Common myeloid progenitor, CD34-positive (primary cell): ENCODE measurements at regions of chr14 and their contacts with region 1.

Region 1: GRCh38 chr14:63632932-63633514 is 8.6 kb downstream of the WDR89 start:
- DNase-seq: peak; percentile 38 to 69 (median 69)
- H3K4me3 ChIP-seq: no peak overlapping the region
- H3K27ac ChIP-seq: no peak overlapping the region
- H3K4me1 ChIP-seq: no peaks in the 10 kb centered on the region
- H3K27me3 ChIP-seq: no peaks in the 10 kb centered on the region

Region 2: DNA sequence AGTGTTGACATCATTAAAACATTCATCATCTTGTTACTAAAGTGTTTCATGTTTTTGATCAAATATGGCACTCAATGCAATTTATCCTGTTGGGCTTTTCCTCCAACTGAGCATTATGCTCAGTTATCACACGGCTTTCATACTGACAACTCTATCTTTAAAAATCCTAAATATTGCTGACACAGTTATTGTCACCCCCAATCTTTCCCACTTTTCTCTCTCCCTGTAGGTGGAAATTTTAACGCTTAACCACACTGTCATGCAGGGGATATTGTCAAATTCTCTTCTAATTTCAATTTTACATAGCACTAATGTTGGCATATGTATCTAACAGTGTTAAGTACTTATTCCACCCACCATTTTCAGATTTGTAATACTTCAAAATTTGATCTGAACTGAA is 254.6 kb before region 1 on chr14:
- CTCF ChIA-PET with region 1: no interaction called
- POLR2A ChIA-PET with region 1: no interaction called
- DNase-seq: no peak
- H3K4me3 ChIP-seq: no peak overlapping the region
- H3K27ac ChIP-seq: no peak overlapping the region
- H3K4me1 ChIP-seq: peaks cover 0 to 3% (median 0%) of the 10 kb centered on the region in 4 experiments
- H3K27me3 ChIP-seq: no peaks in the 10 kb centered on the region

Region 3: GRCh38 chr14:63616015-63616414 is 17.0 kb before region 1 on chr14:
- CTCF ChIA-PET with region 1: interaction called, 10 read pairs
- POLR2A ChIA-PET with region 1: no interaction called
- DNase-seq: peak in 2 of 3 donors; percentile 19 to 31
- H3K4me3 ChIP-seq: no peak overlapping the region
- H3K27ac ChIP-seq: peak overlapping the region in 1 of 2 experiments; percentile 9
- H3K4me1 ChIP-seq: peaks cover 3 to 20% (median 9%) of the 10 kb centered on the region in 4 experiments
- H3K27me3 ChIP-seq: no peaks in the 10 kb centered on the region

Region 4: DNA sequence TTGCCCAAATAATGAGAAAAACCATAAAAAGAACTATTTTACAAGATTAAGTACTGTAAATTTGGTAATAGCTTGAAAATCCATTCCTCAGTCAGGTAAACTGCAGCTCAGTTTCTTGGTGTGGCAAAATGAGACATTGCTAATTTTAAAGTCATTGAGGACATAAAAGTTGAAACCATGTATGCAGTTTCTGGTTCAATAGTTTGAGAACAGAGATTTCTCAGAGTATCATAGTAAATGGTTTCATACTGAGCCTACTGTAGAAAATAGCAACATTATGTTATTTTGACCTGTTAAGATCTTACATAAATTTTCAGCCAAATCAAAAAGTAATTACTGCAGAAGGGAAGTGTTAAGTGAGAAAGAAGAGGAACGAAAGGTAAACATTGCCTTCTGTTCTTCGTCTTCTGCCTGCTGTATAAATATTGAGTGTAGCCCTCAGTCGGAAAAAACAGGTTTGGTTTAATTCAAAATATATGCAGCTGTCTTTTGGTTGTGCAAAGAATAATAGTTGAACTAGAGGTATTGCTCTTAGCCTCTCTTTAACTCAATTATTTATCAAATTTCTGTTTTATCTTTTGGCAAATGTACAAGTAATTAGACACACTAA is 339.4 kb after region 1 on chr14:
- CTCF ChIA-PET with region 1: no interaction called
- POLR2A ChIA-PET with region 1: no interaction called
- DNase-seq: no peak
- H3K4me3 ChIP-seq: no peak overlapping the region
- H3K27ac ChIP-seq: no peak overlapping the region
- H3K4me1 ChIP-seq: no peaks in the 10 kb centered on the region
- H3K27me3 ChIP-seq: no peaks in the 10 kb centered on the region